ENCODE measurements at regions of chr6 and their contacts with region 1.

Region 1: GRCh38 chr6:163501026-163501425 is 86.5 kb downstream of the QKI start:
- DNase-seq: no peak
- ATAC-seq: no peak
- H3K4me3 ChIP-seq: no peak overlapping the region
- H3K27ac ChIP-seq: peak overlapping the region in 2 of 10 donors; percentile 11 to 29
- H3K4me1 ChIP-seq: peaks cover 10 to 99% (median 81%) of the 10 kb centered on the region in 9 donors
- H3K27me3 ChIP-seq: no peaks in the 10 kb centered on the region
- CTCF ChIP-seq: peak in 5 of 9 donors; percentile 3 to 14 (median 12)

Region 2: GRCh38 chr6:163454425-163454824 is 46.6 kb before region 1 on chr6:
- intact Hi-C with region 1: loop called in 1 of 10 experiments (anchors 5 kb)
- DNase-seq: no peak
- ATAC-seq: no peak
- H3K4me3 ChIP-seq: no peak overlapping the region
- H3K27ac ChIP-seq: no peak overlapping the region
- H3K4me1 ChIP-seq: peaks cover 7 to 99% (median 92%) of the 10 kb centered on the region in 9 donors
- H3K27me3 ChIP-seq: no peaks in the 10 kb centered on the region
- CTCF ChIP-seq: no peak

Region 3: DNA sequence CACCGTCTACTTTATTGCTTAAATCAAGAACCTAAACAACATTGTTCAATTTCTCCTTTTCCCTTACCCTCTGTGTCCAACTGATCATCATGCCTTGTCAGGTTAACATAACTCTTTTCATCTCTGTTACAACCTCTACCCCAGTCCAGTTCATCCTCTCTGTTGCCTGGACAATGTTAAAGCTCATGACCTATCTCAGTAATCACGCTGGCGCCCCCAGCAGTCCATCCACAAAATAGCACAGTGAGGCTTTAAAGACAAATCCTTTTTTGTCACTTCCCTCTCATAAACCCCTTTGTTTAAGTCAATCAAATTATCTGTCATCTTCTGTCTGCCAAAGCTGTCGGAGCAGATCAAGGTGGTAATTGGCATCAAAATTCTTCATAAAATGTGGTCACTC is 53.6 kb after region 1 on chr6:
- intact Hi-C with region 1: no loop called
- DNase-seq: peak in 1 of 2 donors; percentile 44
- ATAC-seq: peak in 4 of 8 donors; percentile 29 to 53 (median 45)
- H3K4me3 ChIP-seq: no peak overlapping the region
- H3K27ac ChIP-seq: peak overlapping the region in 2 of 10 donors; percentile 37 to 49
- H3K4me1 ChIP-seq: peaks cover 0 to 69% (median 34%) of the 10 kb centered on the region in 9 donors
- H3K27me3 ChIP-seq: no peaks in the 10 kb centered on the region
- CTCF ChIP-seq: peak in 8 of 9 donors; percentile 29 to 64 (median 54)